Mammary epithelial cell (primary cell): ENCODE measurements at regions of chr17 and their contacts with region 1.

Region 1: GRCh38 chr17:78112518-78113226 is 15.9 kb downstream of the TMC6 start:
- DNase-seq: peak; percentile 38
- H3K4me3 ChIP-seq: no peak overlapping the region
- H3K27ac ChIP-seq: no peak overlapping the region
- H3K4me1 ChIP-seq: no peaks in the 10 kb centered on the region
- H3K27me3 ChIP-seq: no peaks in the 10 kb centered on the region
- CTCF ChIP-seq: peak; percentile 91 to 99

Region 2: DNA sequence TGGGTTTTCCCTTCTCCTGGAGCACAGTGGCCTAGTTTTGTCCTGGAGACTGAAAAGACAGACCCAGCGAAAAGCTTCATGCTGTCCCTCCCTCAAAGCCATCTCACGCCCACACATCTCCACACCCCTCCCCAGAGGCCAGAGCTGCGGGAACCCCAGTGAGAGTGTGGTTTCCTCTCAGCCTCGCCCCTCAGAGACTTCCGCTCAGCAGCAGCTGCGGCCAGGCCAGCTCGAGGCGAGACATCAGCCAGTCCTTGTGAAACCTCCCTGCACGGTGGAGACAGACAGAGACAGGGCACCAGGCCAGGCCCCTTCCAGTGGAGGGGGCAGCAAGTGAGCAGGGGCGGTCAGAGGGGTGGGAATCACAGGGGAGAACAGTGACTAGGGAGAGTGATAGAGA is 231.1 kb before region 1 on chr17:
- CTCF ChIA-PET with region 1: no interaction called
- dilution Hi-C with region 1: no loop called
- in situ Hi-C with region 1: no loop called
- intact Hi-C with region 1: no loop called
- DNase-seq: peak; percentile 55
- H3K4me3 ChIP-seq: no peak overlapping the region
- H3K27ac ChIP-seq: no peak overlapping the region
- H3K4me1 ChIP-seq: peaks cover 19% of the 10 kb centered on the region
- H3K27me3 ChIP-seq: no peaks in the 10 kb centered on the region
- CTCF ChIP-seq: no peak

Region 3: DNA sequence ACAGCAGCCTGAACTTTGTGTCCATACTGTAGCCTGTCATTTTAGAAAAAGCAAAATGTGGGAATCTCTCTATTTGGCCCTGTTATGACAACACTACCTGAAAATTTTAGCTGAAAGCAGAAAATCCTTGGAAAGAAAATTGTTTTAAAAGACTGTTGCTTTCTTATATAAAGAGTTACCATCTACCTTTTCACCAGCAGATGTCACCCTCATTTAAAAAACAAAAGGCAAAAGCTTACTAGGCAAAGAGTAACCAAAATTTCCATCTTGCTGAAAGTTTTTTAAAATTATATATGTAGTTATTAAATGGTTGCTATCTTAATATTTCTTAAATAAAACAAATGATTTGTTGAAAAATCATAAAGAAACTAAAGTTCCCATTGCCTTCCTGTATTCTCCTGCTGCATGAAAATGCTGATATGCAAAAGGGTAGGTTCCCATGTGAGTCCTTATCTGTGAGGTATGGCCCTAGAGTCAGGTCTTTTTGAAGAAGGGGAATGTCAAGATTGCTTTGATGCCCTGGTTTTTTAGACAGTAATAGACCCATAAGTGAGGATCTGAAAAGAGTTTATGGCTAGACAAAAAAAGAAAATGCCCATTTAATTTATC is 93.2 kb before region 1 on chr17:
- CTCF ChIA-PET with region 1: interaction called, 6 read pairs
- dilution Hi-C with region 1: no loop called
- in situ Hi-C with region 1: no loop called
- intact Hi-C with region 1: loop called (anchors 2 kb)
- DNase-seq: no peak
- H3K4me3 ChIP-seq: no peak overlapping the region
- H3K27ac ChIP-seq: no peak overlapping the region
- H3K4me1 ChIP-seq: no peaks in the 10 kb centered on the region
- H3K27me3 ChIP-seq: no peaks in the 10 kb centered on the region
- CTCF ChIP-seq: peak; percentile 50 to 66

Region 4: DNA sequence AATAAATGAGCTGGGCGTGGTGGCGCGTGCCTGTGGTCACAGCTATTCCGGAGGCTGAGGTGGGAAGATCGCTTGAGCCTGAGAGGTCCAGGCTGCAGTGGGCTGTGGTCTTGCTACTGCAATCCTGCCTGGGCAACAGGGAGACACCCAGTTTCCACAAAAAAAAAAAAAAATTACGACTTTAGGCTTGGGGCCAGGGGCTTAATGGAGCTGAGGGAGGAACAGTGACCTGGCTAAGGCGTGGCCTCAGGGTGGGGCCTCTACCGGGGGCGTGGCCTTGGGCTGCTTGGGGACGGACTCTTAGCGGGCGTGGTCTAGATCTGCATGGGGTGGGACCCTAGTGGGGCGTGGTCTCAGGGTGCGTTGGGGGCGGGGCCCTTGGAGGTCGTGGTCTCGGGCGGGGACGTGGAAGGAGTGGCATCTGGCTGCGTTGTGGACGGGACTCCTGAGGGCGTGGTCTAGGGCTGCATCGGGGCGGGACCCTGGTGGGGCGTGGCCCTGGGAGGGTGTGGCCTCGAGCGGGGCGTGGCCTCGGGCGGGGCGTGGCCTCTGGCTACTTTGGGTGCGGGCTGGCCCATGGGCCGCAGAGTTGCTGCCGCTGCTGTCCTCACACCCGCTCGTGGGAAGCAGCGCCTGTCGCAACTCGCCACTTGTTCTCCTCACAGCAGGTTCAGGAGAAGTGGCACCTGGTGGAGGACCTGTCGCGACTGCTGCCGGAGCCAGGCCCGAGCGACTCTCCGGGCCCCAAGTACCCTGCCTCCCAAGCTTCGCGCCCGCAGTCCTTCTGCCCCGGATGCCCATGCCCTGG is 27.7 kb after region 1 on chr17:
- CTCF ChIA-PET with region 1: interaction called, 10 read pairs
- dilution Hi-C with region 1: no loop called
- in situ Hi-C with region 1: no loop called
- intact Hi-C with region 1: no loop called
- DNase-seq: peak; percentile 81
- H3K4me3 ChIP-seq: peak overlapping the region in 1 of 3 experiments; percentile 9
- H3K27ac ChIP-seq: no peak overlapping the region
- H3K4me1 ChIP-seq: peaks cover 32% of the 10 kb centered on the region
- H3K27me3 ChIP-seq: no peaks in the 10 kb centered on the region
- CTCF ChIP-seq: no peak

Region 5: DNA sequence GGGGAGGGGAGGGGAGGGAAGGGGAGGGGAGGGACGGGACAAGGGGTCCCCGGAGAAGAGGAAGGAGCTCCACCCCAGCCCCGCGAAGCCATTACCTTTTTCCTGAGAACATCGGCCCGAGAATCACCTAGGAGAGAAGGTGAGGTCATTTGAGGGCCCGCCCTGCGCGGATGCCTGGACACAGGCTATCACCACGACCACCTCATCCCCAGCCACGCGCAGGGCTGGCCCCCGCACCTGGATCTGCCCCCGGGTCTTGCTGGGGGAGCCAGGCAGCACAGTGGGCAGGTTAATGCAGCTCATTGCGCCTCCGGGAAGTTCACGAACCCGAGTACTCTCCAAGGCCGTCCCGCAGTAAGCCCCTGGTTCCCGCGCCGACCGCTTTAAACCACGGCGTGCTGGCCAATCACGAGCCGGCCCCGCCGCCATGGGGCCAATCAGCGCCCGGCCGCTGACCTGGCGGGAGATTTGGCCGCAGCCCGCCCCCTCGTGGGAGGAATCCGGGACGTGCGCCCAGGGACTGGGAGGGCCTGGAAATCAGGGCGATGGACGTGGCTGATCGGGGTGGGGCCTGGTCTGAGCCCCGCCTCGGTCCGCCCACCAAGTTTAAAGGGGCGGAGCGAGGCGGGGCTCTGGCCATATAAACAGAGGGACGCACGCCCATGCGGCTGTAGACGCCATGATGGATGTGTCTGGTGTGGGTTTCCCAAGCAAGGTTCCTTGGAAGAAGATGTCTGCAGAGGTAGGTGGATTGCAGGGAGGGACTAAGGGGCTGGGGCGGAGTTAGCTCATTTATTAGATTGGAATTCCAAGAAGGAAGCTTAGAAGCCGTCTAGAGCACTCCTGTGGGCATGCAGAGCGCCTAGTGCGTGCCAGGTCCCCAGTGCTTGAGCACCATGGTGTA is 74.3 kb after region 1 on chr17 and contains the starts of genes AFMID and TK1:
- CTCF ChIA-PET with region 1: no interaction called
- dilution Hi-C with region 1: no loop called
- in situ Hi-C with region 1: loop called in 1 of 2 experiments (anchors 5 kb)
- intact Hi-C with region 1: no loop called
- DNase-seq: peak; percentile 97
- H3K4me3 ChIP-seq: peak within 1 kb of the TSS; percentile 66 to 75 (median 71)
- H3K27ac ChIP-seq: peak within 1 kb of the TSS; percentile 57
- H3K4me1 ChIP-seq: peaks cover 13% of the 10 kb centered on the region
- H3K27me3 ChIP-seq: no peaks in the 10 kb centered on the region
- CTCF ChIP-seq: peak; percentile 43 to 86
- total RNA-seq, gene AFMID: 16.5 to 32.5 TPM
- total RNA-seq, gene TK1: 7.7 to 79.5 TPM

Region 6: DNA sequence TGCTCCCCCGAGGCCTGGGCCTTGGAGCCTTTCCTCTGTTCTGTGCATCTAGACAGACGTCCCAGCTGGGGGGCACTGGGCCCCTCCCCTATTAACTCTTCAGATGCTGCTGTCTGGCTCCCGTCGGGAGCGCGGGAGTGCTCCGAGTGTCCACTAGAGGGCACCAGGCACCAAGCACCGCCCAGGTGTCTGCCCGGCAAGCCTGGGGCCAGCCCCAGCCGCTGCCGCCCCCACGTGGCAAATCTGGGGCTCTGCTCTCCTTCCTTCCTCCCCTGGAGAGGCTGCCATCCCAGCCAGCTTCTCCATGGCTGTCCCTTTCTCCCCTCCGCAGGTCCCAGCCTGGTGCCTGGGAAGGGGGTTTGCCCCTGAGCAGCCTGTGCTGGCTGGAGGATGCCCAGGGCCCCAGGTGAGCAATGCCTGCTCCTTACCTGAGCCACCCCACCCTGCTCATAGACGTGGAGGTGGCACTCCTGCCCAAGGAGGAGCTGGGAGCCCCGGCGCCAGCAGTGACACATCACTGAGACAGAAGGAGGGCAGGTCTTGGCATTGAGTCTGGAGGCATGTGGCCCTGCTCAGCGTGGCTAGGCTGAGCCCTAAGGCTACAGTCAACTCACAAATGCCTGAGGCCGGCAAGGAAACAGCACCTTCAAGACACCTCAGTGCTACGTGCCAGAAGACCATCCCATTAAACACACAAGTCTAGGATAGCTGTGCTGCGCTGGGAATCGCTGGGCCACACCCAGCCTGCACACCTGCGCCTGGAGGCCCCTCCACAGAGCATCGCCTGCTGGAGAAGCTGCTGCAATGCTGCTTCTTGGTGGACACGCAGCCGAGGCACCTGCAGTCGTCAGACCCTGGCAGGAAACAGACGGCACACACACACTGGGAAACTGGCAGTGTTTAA is 138.5 kb after region 1 on chr17:
- CTCF ChIA-PET with region 1: no interaction called
- dilution Hi-C with region 1: loop called (anchors 5 kb)
- in situ Hi-C with region 1: loop called in 1 of 2 experiments (anchors 25 kb)
- intact Hi-C with region 1: loop called (anchors 1 kb)
- DNase-seq: peak; percentile 81
- H3K4me3 ChIP-seq: peak overlapping the region in 2 of 3 experiments; percentile 27 to 38
- H3K27ac ChIP-seq: no peak overlapping the region
- H3K4me1 ChIP-seq: peaks cover 10% of the 10 kb centered on the region
- H3K27me3 ChIP-seq: no peaks in the 10 kb centered on the region
- CTCF ChIP-seq: peak; percentile 96 to 99

Region 7: DNA sequence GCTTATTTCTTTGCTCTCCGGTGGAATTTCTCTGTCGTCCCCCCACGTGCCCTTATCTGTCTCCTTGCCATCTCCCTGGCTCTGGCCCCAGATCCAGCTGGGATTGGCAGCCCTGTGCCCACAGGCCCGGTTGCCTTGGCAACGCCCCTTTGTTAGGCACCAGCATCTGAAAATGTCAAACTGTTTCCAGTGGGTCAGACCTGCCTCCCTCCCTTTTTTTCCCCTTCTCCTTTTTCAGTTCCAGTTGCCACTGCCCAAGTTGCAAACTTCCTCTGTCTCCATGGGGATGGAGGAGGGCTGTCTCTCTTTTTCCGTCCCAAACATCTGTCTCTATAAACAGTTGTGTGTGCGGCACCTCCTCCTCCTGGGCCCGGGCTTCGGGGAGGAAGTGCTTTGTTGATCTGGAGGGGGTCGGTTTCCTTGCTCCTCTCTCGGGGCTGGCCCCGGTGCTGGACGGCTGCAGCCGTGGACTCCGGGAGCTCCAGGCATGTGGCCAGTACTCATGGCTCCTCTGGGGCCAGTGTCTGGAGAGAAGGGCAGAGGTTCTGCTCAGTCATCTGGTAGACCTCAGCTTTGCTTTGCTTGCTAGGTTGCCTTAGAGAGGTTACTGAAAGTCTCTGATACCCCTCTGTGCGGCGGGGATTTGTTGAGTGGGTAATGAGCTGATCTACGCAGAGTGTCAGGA is 211.9 kb after region 1 on chr17:
- CTCF ChIA-PET with region 1: no interaction called
- dilution Hi-C with region 1: no loop called
- in situ Hi-C with region 1: no loop called
- intact Hi-C with region 1: no loop called
- DNase-seq: no peak
- H3K4me3 ChIP-seq: no peak overlapping the region
- H3K27ac ChIP-seq: no peak overlapping the region
- H3K4me1 ChIP-seq: peaks cover 28% of the 10 kb centered on the region
- H3K27me3 ChIP-seq: no peaks in the 10 kb centered on the region
- CTCF ChIP-seq: no peak

Region 8: DNA sequence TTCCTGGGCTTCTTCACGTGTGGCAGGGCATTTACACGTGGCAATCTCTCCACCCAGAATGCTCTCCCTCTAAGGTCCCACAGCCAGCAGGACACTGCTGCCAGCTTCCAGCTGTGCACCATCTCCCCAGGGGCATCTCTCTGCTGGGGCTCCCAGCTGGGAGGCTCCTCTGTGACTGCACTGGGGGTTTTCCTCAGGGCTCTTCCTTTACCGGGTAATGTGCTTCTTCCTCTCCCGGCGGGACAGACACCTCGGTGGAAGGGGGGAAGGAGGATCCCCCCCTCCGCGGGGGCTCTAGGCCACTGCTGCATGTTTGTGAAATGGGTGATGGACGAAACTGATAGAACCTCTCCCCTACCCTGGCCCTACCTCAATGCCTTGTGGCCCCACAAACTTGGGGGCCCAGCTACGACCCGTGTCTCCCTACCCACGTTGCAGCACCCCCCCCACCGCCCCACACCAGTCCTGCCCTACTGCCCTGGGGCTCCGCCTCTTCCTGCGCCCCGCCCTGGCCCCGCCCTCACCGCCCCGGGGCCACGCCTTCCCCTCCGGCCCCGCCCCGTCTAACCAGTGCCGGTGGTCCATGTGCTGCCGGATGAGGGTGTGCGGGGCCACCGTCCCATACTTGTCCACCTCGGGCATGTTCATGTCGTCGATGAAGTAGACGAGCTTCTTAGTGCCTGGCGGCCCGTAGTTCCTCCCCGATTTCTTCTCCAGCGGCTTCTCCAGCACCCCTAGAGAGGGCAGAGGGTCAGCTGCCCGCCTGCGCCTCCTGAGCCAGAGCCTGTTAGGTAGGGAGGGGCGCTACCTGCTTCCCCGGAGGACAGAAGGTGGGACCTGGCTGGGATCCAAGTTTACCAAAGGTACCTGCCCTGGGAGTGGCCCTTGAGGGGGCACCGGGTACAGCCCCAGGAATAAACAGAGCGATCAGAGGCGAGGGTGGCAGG is 371.9 kb after region 1 on chr17:
- CTCF ChIA-PET with region 1: no interaction called
- dilution Hi-C with region 1: loop called (anchors 5 kb)
- in situ Hi-C with region 1: no loop called
- intact Hi-C with region 1: no loop called
- DNase-seq: no peak
- H3K4me3 ChIP-seq: peak overlapping the region in 2 of 3 experiments; percentile 17 to 24
- H3K27ac ChIP-seq: no peak overlapping the region
- H3K4me1 ChIP-seq: peaks cover 4% of the 10 kb centered on the region
- H3K27me3 ChIP-seq: no peaks in the 10 kb centered on the region
- CTCF ChIP-seq: no peak